Esophagus muscularis mucosa (tissue), 4 donors: ENCODE measurements at regions of chr20 and their contacts with region 1.

Region 1: DNA sequence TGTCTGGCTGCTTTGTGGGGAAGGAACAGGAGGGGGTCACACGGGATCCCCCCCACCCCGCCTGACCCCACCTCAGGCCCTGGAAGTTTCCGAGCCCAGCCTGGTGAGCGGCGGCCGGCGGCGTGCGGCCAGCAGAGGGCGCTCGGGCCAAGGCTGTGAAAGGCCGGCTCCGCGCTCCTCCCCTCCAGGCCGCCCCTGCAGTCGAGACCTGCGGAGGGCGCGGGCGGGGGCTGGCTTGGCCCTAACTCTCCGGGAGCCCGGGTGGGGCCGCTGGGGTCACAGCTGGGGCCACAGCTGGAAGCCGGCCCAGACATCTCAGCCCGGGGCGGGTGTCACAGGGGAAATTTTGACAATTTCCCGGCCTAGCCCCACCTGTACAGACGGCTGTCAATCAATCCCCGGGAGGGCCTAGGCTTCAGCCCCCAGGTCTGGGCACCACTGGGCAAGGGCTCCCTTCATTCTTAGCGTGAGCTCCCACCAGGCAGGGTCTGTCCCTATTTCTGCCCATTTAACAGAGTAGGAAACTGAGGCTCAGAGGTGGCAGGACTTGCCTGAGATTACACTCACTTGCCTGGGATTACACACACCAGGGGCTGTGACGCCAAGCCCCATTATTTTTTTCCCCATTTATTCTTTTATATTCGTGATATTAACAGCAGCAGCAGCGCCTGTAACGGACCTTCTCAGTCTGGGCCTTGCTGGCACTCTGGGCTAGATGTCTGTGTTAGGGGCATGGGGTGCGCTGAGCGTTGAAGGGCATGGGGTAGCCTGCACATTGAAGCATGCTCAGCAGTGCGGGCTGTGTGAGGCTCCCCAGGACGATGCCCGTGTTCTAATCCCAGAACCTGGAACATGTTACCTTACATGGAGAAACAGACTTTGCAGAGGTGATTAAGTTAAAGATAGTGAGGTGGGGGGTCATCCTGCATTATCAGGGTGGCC is 23.0 kb downstream of the ZBP1 start:
- DNase-seq: no peak
- H3K4me3 ChIP-seq: peak overlapping the region in 2 of 4 donors; percentile 17 to 45
- H3K27ac ChIP-seq: no peak overlapping the region
- H3K4me1 ChIP-seq: peaks cover 7 to 23% (median 14%) of the 10 kb centered on the region in 4 donors
- H3K27me3 ChIP-seq: peaks cover 0 to 17% (median 0%) of the 10 kb centered on the region in 4 donors
- CTCF ChIP-seq: peak; percentile 88 to 97 (median 93)
- EP300 ChIP-seq: no peak
- POLR2A ChIP-seq: no peak

Region 2: DNA sequence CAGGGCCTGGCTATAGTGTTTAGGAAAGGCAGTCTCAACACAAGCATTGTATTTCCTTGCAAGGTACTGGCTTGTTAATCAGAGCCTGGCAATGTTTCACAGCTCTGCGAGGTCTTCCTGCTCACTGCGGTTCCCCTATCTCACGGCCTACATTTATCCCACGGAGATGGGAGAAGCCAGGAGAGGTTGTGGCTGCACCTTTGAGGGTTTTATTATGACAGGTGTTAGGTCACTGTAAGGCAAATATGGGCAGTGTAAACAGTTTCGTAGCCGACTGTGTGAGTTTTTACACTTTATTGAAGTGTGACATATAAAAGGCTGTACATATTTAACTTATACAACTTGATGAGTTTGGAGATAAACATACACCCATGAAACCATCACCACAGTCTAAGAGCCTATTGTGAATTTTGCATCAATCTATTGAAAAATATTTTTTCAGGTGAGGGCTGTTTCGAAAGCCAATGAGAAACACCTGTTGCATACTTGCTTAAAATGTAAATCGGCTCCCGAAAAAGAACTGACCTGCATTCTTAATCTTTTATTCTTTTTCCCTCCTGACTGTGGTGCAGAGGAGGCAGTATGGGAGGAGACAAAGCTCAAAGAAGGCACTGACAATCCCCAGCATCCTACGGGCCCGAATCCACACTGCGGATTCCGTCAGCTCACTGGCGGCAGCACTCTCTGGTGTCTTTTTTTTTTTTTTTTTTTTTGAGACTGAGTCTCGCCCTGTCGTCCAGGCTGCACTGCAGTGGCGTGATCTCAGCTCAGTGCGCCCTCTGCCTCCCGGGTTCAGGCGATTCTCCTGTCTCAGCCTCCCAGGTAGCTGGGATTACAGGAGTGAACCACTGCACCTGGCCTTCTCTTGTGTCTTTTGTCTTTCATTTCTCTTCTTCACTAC is 213.6 kb before region 1 on chr20:
- intact Hi-C with region 1: loop called (anchors 5 kb)
- DNase-seq: no peak
- H3K4me3 ChIP-seq: no peak overlapping the region
- H3K27ac ChIP-seq: no peak overlapping the region
- H3K4me1 ChIP-seq: peaks cover 0 to 15% (median 7%) of the 10 kb centered on the region in 4 donors
- H3K27me3 ChIP-seq: no peaks in the 10 kb centered on the region
- CTCF ChIP-seq: no peak
- EP300 ChIP-seq: no peak
- POLR2A ChIP-seq: no peak

Region 3: GRCh38 chr20:57514273-57514751 is 83.0 kb before region 1 on chr20:
- intact Hi-C with region 1: loop called (anchors 1 kb)
- DNase-seq: peak; percentile 94
- H3K4me3 ChIP-seq: no peak overlapping the region
- H3K27ac ChIP-seq: no peak overlapping the region
- H3K4me1 ChIP-seq: peaks cover 0 to 9% (median 4%) of the 10 kb centered on the region in 4 donors
- H3K27me3 ChIP-seq: no peaks in the 10 kb centered on the region
- CTCF ChIP-seq: peak; percentile 82 to 89 (median 87)
- EP300 ChIP-seq: no peak
- POLR2A ChIP-seq: no peak

Region 4: DNA sequence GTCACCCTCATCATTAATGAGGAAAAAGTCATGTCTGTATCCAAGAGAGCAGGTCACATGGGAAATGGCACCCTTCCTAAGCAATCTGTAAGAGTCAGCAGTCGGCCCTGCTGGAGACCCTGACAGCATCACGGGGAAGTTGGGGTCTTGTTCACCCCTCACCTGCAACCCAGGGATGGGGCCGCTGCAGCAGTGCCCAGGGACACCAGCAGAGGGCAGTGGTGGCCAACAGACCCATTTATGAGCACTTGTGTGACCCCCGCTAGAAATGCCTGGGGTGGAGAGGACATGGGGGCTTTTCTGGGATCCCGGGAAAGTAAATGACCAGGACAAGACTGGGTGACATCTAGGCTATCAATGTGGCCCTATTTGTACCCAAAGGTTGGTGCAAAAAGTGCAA is 595.3 kb after region 1 on chr20:
- intact Hi-C with region 1: loop called (anchors 5 kb)
- DNase-seq: no peak
- H3K4me3 ChIP-seq: no peak overlapping the region
- H3K27ac ChIP-seq: no peak overlapping the region
- H3K4me1 ChIP-seq: no peaks in the 10 kb centered on the region
- H3K27me3 ChIP-seq: peaks cover 0 to 15% (median 0%) of the 10 kb centered on the region in 4 donors
- CTCF ChIP-seq: peak; percentile 19 to 56 (median 23)
- EP300 ChIP-seq: no peak
- POLR2A ChIP-seq: no peak

Region 5: GRCh38 chr20:58209652-58210397 is 612.6 kb after region 1 on chr20:
- intact Hi-C with region 1: loop called (anchors 1 kb)
- DNase-seq: peak; percentile 93
- H3K4me3 ChIP-seq: peak overlapping the region in 1 of 4 donors; percentile 19
- H3K27ac ChIP-seq: no peak overlapping the region
- H3K4me1 ChIP-seq: peaks cover 0 to 8% (median 4%) of the 10 kb centered on the region in 4 donors
- H3K27me3 ChIP-seq: peaks cover 0 to 22% (median 2%) of the 10 kb centered on the region in 4 donors
- CTCF ChIP-seq: peak; percentile 100
- EP300 ChIP-seq: no peak
- POLR2A ChIP-seq: no peak